Activated B cell treated with CpG ODN at 0.5 μM for 24 hours (primary cell): ENCODE measurements at regions of chr7 and their contacts with region 1.

Region 1: GRCh38 chr7:17725796-17726195 is 214.5 kb downstream of the SNX13 start:
- DNase-seq: no peak
- ATAC-seq: no peak
- H3K4me3 Mint-ChIP-seq: no peak overlapping the region
- H3K27ac Mint-ChIP-seq: no peak overlapping the region
- H3K4me1 Mint-ChIP-seq: no peaks in the 10 kb centered on the region
- H3K27me3 Mint-ChIP-seq: no peaks in the 10 kb centered on the region
- CTCF ChIP-seq: no peak

Region 2: DNA sequence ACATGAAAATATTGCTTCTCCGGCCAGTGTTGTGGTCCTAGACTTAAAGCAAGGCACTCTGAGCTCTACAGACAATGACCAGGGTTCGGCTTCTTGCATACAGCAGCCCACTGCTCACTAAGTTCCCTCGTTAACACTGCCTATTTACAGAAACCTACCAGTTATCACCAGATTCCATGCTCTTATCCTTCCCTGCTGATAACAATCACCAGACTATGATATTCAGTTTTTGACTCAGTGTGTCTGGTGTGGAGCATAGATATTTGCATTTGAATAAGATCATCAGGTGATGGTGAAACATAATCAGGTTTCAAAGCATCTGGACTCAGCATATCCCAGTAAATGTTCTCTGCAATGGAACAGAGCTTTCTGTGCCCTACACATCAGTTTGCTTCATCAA is 32.2 kb after region 1 on chr7:
- CTCF ChIA-PET with region 1: no interaction called
- POLR2A ChIA-PET with region 1: no interaction called
- intact Hi-C with region 1: loop called (anchors 1 kb)
- DNase-seq: no peak
- ATAC-seq: no peak
- H3K4me3 Mint-ChIP-seq: no peak overlapping the region
- H3K27ac Mint-ChIP-seq: no peak overlapping the region
- H3K4me1 Mint-ChIP-seq: no peaks in the 10 kb centered on the region
- H3K27me3 Mint-ChIP-seq: no peaks in the 10 kb centered on the region
- CTCF ChIP-seq: no peak